ENCODE measurements at regions of chr7 and their contacts with region 1.

Region 1: DNA sequence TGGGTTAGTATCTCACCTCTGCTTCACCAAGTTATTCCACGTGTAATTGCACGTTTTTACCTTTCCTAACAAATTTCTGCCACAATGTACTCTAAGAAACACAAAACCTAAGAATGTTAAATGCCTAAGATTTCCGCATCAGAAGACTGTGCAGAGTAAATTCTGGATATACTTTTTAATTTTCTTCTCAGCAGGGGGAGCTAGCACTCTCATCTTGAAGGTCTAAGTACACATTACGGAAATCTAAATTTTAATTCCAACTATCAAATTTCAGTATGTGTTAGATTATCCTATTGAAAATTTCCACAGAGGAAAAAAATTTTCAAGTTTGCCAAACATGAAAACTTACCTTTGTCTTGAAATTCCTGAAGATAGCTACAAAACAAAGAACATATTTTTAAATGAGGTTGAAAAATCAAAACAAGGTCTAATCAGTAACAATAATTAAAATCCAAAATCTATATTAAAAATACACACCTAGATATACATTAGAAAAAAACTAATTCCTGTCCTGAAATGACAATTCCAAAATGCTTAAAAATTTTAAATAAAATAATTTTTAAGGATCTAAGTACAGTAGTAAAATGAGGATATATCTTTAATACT is 10.5 kb downstream of the SKAP2 start:
- DNase-seq: no peak
- ATAC-seq: peak; percentile 86 to 93
- H3K4me3 ChIP-seq: no peak overlapping the region
- H3K27ac ChIP-seq: no peak overlapping the region
- H3K4me1 ChIP-seq: no peaks in the 10 kb centered on the region
- H3K27me3 ChIP-seq: peaks cover 35 to 53% (median 52%) of the 10 kb centered on the region in 3 donors
- CTCF ChIP-seq: peak; percentile 40 to 73 (median 63)
- POLR2A ChIP-seq: no peak

Region 2: GRCh38 chr7:25862260-25863037 is 991.4 kb before region 1 on chr7:
- in situ Hi-C with region 1: loop called (anchors 10 to 25 kb)
- intact Hi-C with region 1: no loop called
- DNase-seq: peak; percentile 98 to 100
- ATAC-seq: peak; percentile 94 to 95
- H3K4me3 ChIP-seq: peak overlapping the region; percentile 41 to 49 (median 44)
- H3K27ac ChIP-seq: peak overlapping the region; percentile 66 to 78 (median 77)
- H3K4me1 ChIP-seq: peaks cover 11 to 16% of the 10 kb centered on the region in 2 donors
- H3K27me3 ChIP-seq: peaks cover 38 to 48% (median 42%) of the 10 kb centered on the region in 3 donors
- CTCF ChIP-seq: no peak
- POLR2A ChIP-seq: peak in 1 of 2 donors; percentile 15

Region 3: GRCh38 chr7:26376175-26376917 is 477.5 kb before region 1 on chr7:
- in situ Hi-C with region 1: loop called in 2 of 4 experiments (anchors 10 kb)
- intact Hi-C with region 1: no loop called
- DNase-seq: no peak
- ATAC-seq: peak in 1 of 2 donors; percentile 36
- H3K4me3 ChIP-seq: peak overlapping the region; percentile 31 to 50 (median 42)
- H3K27ac ChIP-seq: no peak overlapping the region
- H3K4me1 ChIP-seq: peaks cover 3 to 6% of the 10 kb centered on the region in 2 donors
- H3K27me3 ChIP-seq: peaks cover 81 to 84% (median 81%) of the 10 kb centered on the region in 3 donors
- CTCF ChIP-seq: no peak
- POLR2A ChIP-seq: no peak

Region 4: GRCh38 chr7:26466969-26467529 is 386.8 kb before region 1 on chr7:
- in situ Hi-C with region 1: no loop called
- intact Hi-C with region 1: no loop called
- DNase-seq: no peak
- ATAC-seq: no peak
- H3K4me3 ChIP-seq: no peak overlapping the region
- H3K27ac ChIP-seq: no peak overlapping the region
- H3K4me1 ChIP-seq: no peaks in the 10 kb centered on the region
- H3K27me3 ChIP-seq: no peaks in the 10 kb centered on the region
- CTCF ChIP-seq: no peak
- POLR2A ChIP-seq: no peak

Region 5: GRCh38 chr7:27143023-27143949 is 289.4 kb after region 1 on chr7 and contains the start of gene HOXA5:
- in situ Hi-C with region 1: loop called in 2 of 4 experiments (anchors 5 to 10 kb)
- intact Hi-C with region 1: no loop called
- DNase-seq: peak; percentile 76 to 80
- ATAC-seq: peak; percentile 82 to 95
- H3K4me3 ChIP-seq: peak within 1 kb of the TSS; percentile 56 to 68 (median 62)
- H3K27ac ChIP-seq: peak within 1 kb of the TSS; percentile 79 to 94 (median 88)
- H3K4me1 ChIP-seq: peaks cover 18 to 24% of the 10 kb centered on the region in 2 donors
- H3K27me3 ChIP-seq: no peaks in the 10 kb centered on the region
- CTCF ChIP-seq: peak in 4 of 5 experiments; percentile 77 to 90 (median 86)
- POLR2A ChIP-seq: peak; percentile 57 to 83
- total RNA-seq, gene HOXA5: 2.7 to 7.1 (median 7.0) TPM

Region 6: GRCh38 chr7:27150568-27151340 is 296.9 kb after region 1 on chr7:
- in situ Hi-C with region 1: loop called in 2 of 4 experiments (anchors 5 to 10 kb)
- intact Hi-C with region 1: no loop called
- DNase-seq: peak; percentile 66 to 78
- ATAC-seq: peak; percentile 65 to 69
- H3K4me3 ChIP-seq: peak overlapping the region; percentile 64 to 75 (median 70)
- H3K27ac ChIP-seq: peak overlapping the region; percentile 90 to 96 (median 94)
- H3K4me1 ChIP-seq: peaks cover 56 to 70% of the 10 kb centered on the region in 2 donors
- H3K27me3 ChIP-seq: no peaks in the 10 kb centered on the region
- CTCF ChIP-seq: peak; percentile 86 to 92 (median 89)
- POLR2A ChIP-seq: peak; percentile 84 to 87

Measured in gastrocnemius medialis (tissue), 4 donors.